Activated naive CD4-positive, alpha-beta T cell treated with anti-CD3 and anti-CD28 coated beads for 36 hours (primary cell): ENCODE measurements at regions of chr15 and their contacts with region 1.

Region 1: GRCh38 chr15:50765195-50765973 is at the start of gene SPPL2A:
- DNase-seq: peak; percentile 93
- H3K4me3 Mint-ChIP-seq: peak within 1 kb of the TSS; percentile 90
- H3K27ac Mint-ChIP-seq: peak within 1 kb of the TSS; percentile 99
- H3K4me1 Mint-ChIP-seq: peaks cover 55% of the 10 kb centered on the region
- H3K27me3 Mint-ChIP-seq: no peaks in the 10 kb centered on the region
- total RNA-seq, gene SPPL2A: 37.7 to 41.6 TPM

Region 2: DNA sequence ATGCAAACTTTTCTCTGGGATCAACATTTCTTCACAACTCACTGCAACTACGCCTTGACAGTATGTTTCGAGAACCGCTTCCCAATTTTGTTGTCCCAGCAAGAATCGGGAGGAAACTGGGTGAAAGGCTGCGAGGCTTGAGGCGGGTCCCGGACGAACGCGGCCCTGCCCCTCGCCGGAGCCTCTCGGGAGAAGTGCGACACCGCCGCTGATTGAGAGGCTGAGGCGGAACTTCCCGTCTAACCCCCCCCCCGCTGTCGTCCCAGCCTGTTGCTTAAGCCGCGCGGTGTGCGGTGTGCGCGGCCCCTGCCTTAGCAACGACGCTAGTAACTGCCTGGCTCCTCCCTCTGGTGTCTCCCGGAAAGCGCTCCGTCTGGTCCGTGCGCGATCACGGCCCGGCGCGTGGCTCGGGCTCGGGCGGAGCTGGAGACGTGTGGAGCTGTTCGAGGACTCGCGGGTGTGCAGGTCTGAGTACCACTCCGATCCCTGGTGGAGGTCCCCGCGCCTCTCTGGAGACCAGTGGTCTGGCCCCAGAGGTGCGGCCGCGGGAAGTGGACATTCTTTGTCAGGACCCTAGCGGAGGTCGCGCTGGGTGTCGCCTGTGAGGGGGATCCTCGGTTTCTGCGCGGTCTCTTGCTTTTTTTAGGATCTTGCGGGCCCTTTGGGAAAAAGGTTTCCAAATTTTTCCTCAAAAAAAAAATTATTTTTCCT is 1144.6 kb before region 1 on chr15 and contains the starts of genes DTWD1 and FAM227B:
- CTCF ChIA-PET with region 1: no interaction called
- intact Hi-C with region 1: loop called (anchors 2 kb)
- DNase-seq: peak; percentile 96
- H3K4me3 Mint-ChIP-seq: peak within 1 kb of the TSS; percentile 88
- H3K27ac Mint-ChIP-seq: peak within 1 kb of the TSS; percentile 91
- H3K4me1 Mint-ChIP-seq: peaks cover 33% of the 10 kb centered on the region
- H3K27me3 Mint-ChIP-seq: no peaks in the 10 kb centered on the region
- total RNA-seq, gene DTWD1: 18.5 to 19.4 TPM
- total RNA-seq, gene FAM227B: 2.0 to 2.8 TPM

Region 3: DNA sequence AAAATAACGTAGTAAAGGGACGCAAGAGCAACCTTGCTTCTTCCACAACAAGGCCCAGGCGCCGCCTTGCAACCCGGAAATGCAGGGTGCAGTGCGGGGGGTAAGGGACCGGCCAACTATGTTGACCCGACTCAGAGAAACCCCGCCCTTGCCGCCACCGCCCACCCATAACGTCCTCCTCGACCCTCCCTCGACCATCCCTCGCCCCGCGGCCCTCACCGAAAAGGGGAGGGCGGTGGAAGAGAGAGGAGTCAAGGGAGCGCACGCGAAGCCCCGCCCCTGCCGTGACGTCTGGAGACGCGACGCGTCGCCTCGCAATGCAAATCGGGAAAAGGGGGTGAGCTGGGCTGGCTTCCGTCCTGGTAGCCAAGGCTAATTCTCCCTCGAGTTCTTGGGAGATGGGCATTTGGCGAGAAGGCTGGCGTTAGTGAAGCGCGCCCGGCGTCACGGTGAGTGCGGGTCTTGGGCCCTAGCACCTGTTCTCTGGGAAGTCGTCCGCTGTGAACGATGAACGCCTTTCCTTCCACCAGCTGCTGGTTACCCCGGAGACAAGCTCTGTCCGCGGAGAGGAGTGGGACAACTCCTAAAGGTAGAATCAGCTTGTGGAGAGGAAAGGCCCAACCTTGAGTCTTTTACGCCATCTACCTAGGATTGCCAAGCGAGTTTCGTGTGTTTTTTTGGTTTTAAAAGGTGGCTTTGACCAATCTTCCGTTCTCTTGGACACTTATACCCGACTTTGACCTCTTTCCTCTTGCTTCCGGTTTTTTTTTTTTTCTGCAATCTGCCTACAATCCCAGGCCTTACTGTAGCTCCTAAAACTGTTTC is 341.1 kb before region 1 on chr15 and contains the start of gene USP8:
- CTCF ChIA-PET with region 1: no interaction called
- intact Hi-C with region 1: loop called (anchors 2 kb)
- DNase-seq: peak; percentile 96
- H3K4me3 Mint-ChIP-seq: peak within 1 kb of the TSS; percentile 94
- H3K27ac Mint-ChIP-seq: peak within 1 kb of the TSS; percentile 92
- H3K4me1 Mint-ChIP-seq: peaks cover 30% of the 10 kb centered on the region
- H3K27me3 Mint-ChIP-seq: no peaks in the 10 kb centered on the region
- total RNA-seq, gene USP8: 31.6 TPM

Region 4: GRCh38 chr15:50876989-50877360 is 111.6 kb after region 1 on chr15:
- CTCF ChIA-PET with region 1: interaction called, 7 read pairs
- intact Hi-C with region 1: loop called (anchors 1 kb)
- DNase-seq: peak; percentile 85
- H3K4me3 Mint-ChIP-seq: peak overlapping the region; percentile 75
- H3K27ac Mint-ChIP-seq: peak overlapping the region; percentile 46
- H3K4me1 Mint-ChIP-seq: peaks cover 53% of the 10 kb centered on the region
- H3K27me3 Mint-ChIP-seq: peaks cover 4% of the 10 kb centered on the region